Heart left ventricle (tissue), 16 donors: ENCODE measurements at regions of chr2 and their contacts with region 1.

Region 1: DNA sequence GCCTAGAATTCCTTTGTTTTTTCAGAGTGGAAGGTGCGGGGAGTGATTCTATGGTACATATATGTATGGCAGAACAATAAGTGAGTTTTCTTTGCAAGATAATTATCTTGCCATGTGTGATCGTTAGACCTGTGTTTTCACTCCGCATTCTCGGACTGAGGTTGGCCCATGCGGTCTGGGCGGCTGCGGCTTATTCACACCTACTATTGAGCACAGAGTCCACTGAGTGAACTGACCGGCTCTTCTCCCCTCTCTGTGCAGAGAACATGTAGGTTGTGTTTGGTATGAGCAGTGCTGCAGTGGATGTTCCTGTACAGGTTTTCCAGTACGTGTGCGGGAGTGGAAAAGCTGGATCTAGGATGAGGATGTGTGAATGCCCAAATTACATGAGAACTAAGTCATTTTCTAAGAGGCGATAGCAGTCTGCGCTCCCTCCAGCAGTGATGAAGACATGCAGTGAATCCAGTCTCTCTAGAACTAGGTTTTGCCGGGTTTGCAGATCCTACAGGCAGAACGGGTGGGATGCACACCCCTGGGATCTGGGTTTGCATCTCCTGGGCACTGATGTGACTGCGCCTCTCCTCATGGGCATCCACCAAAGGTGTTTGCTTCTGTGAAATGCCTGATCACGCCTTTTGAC is 27.1 kb downstream of the MTERF4 start:
- DNase-seq: no peak
- ATAC-seq: no peak
- H3K4me3 ChIP-seq: no peak overlapping the region
- H3K27ac ChIP-seq: no peak overlapping the region
- H3K4me1 ChIP-seq: no peaks in the 10 kb centered on the region
- H3K27me3 ChIP-seq: no peaks in the 10 kb centered on the region
- CTCF ChIP-seq: no peak
- POLR2A ChIP-seq: no peak

Region 2: GRCh38 chr2:240933048-240933965 is 141.7 kb before region 1 on chr2:
- intact Hi-C with region 1: no loop called
- DNase-seq: peak; percentile 5 to 58 (median 19)
- ATAC-seq: no peak
- H3K4me3 ChIP-seq: no peak overlapping the region
- H3K27ac ChIP-seq: no peak overlapping the region
- H3K4me1 ChIP-seq: no peaks in the 10 kb centered on the region
- H3K27me3 ChIP-seq: peaks cover 0 to 4% (median 0%) of the 10 kb centered on the region in 9 donors
- CTCF ChIP-seq: no peak
- POLR2A ChIP-seq: no peak

Region 3: DNA sequence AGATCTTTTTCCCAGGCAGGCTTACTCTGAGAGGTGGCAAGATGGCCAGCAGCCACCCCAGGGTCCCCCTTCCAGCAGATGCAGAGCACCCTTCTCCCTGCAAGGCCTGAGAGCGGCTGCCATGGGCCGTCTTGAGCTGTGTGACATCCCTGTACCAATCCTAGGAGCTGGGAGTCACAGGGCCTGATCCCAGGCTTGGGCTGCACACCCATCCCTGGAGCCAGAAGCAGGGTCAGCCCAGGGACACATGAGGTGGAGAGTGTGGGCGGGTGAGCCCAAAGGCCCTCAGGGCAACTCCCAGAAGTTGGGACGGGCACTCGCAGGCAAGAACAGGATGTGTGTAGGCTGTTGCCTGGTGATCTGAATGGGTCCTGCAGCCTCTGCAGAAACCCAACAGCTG is 128.4 kb before region 1 on chr2:
- intact Hi-C with region 1: no loop called
- DNase-seq: peak; percentile 6 to 32 (median 13)
- ATAC-seq: peak in 1 of 4 donors; percentile 11
- H3K4me3 ChIP-seq: no peak overlapping the region
- H3K27ac ChIP-seq: no peak overlapping the region
- H3K4me1 ChIP-seq: no peaks in the 10 kb centered on the region
- H3K27me3 ChIP-seq: no peaks in the 10 kb centered on the region
- CTCF ChIP-seq: no peak
- POLR2A ChIP-seq: no peak

Region 4: DNA sequence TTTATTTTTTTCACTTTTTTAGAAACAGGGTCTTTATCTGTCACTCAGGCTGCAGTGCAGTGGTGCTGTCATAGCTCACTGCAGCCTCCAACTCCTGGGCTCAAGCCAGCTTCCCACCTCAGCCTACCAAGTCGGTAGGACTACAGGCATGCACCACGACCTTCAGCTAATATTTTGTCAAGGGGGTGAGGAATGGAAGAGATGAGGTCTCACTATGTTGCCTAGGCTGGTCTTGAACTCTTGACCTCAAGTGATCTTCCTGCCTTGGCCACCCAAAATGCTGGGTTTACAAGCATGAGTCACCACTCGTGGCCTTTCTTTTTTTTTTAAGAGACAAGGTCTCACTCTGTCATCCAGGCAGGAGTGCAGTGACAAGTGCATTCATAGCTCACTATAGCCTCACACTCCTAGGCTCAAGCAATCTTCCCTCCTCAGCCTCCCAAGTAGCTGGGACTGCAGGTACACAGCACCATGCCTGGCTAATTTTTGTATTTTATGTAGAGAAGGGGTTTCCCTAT is 88.6 kb after region 1 on chr2:
- intact Hi-C with region 1: no loop called
- DNase-seq: no peak
- ATAC-seq: no peak
- H3K4me3 ChIP-seq: no peak overlapping the region
- H3K27ac ChIP-seq: no peak overlapping the region
- H3K4me1 ChIP-seq: peaks cover 0 to 26% (median 18%) of the 10 kb centered on the region in 12 donors
- H3K27me3 ChIP-seq: no peaks in the 10 kb centered on the region
- CTCF ChIP-seq: no peak
- POLR2A ChIP-seq: no peak

Region 5: GRCh38 chr2:241598480-241598879 is 523.5 kb after region 1 on chr2:
- intact Hi-C with region 1: loop called in 1 of 10 experiments (anchors 5 kb)
- DNase-seq: no peak
- ATAC-seq: no peak
- H3K4me3 ChIP-seq: no peak overlapping the region
- H3K27ac ChIP-seq: no peak overlapping the region
- H3K4me1 ChIP-seq: no peaks in the 10 kb centered on the region
- H3K27me3 ChIP-seq: no peaks in the 10 kb centered on the region
- CTCF ChIP-seq: peak in 7 of 12 donors; percentile 12 to 36 (median 24)
- POLR2A ChIP-seq: no peak

Region 6: GRCh38 chr2:241659150-241659739 is 584.2 kb after region 1 on chr2:
- intact Hi-C with region 1: loop called in 1 of 10 experiments (anchors 5 kb)
- DNase-seq: peak in 4 of 5 donors; percentile 34 to 64 (median 59)
- ATAC-seq: peak; percentile 9 to 68 (median 51)
- H3K4me3 ChIP-seq: no peak overlapping the region
- H3K27ac ChIP-seq: no peak overlapping the region
- H3K4me1 ChIP-seq: peaks cover 0 to 7% (median 0%) of the 10 kb centered on the region in 12 donors
- H3K27me3 ChIP-seq: no peaks in the 10 kb centered on the region
- CTCF ChIP-seq: peak; percentile 31 to 75 (median 54)
- POLR2A ChIP-seq: no peak